Activated CD4-positive, alpha-beta T cell treated with anti-CD3 and anti-CD28 coated beads, Interleukin-2, amount 10 ng/mL, durations not matched to agents 24 days and 14 days (primary cell): ENCODE measurements at regions of chr6 and their contacts with region 1.

Region 1: DNA sequence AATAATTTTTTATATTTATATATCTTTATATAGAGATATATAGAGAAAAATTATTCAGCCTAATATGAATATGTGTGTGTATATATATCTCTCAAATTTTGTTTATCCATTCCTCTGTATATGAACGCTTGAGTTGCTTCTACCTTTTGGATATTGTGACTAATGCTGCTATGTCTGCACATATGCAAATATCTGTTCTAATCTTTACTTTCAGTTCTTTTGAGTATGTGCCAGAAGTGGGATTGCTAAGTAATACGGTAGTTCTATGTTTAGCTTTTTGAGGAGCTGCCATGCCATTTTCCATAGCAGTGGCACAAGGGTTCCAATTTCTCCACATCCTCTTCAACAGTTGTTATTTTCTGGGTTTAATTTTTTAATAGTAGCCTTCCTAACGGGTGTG is 72.8 kb upstream of the CEP85L start:
- DNase-seq: no peak
- H3K4me3 Mint-ChIP-seq: peak overlapping the region; percentile 36
- H3K27ac Mint-ChIP-seq: peak overlapping the region; percentile 59
- H3K4me1 Mint-ChIP-seq: peaks cover 51% of the 10 kb centered on the region
- H3K27me3 Mint-ChIP-seq: no peaks in the 10 kb centered on the region

Region 2: DNA sequence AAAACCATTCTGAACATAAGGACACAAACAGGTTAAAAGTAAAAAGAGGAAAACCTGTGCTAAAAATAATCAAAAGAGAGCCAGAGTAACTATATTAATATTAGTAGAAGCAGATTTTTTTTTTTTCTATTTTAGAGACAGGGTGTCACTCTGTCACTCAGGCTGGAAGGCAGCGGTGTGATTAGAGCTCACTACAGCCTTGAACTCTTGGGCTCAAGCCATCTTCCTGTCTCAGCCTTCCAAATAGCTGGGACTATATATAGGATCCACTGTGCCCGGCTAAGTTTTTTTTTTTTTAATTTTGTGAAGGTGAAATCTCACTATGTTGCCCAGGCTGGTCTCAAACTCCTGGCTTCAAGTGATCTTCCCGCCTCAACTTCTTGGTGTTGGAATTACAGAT is 209.5 kb before region 1 on chr6:
- intact Hi-C with region 1: no loop called
- DNase-seq: no peak
- H3K4me3 Mint-ChIP-seq: no peak overlapping the region
- H3K27ac Mint-ChIP-seq: no peak overlapping the region
- H3K4me1 Mint-ChIP-seq: peaks cover 4% of the 10 kb centered on the region
- H3K27me3 Mint-ChIP-seq: no peaks in the 10 kb centered on the region

Region 3: GRCh38 chr6:118565311-118565960 is 158.8 kb before region 1 on chr6:
- intact Hi-C with region 1: loop called (anchors 5 kb)
- DNase-seq: peak; percentile 80
- H3K4me3 Mint-ChIP-seq: no peak overlapping the region
- H3K27ac Mint-ChIP-seq: no peak overlapping the region
- H3K4me1 Mint-ChIP-seq: peaks cover 13% of the 10 kb centered on the region
- H3K27me3 Mint-ChIP-seq: no peaks in the 10 kb centered on the region

Region 4: DNA sequence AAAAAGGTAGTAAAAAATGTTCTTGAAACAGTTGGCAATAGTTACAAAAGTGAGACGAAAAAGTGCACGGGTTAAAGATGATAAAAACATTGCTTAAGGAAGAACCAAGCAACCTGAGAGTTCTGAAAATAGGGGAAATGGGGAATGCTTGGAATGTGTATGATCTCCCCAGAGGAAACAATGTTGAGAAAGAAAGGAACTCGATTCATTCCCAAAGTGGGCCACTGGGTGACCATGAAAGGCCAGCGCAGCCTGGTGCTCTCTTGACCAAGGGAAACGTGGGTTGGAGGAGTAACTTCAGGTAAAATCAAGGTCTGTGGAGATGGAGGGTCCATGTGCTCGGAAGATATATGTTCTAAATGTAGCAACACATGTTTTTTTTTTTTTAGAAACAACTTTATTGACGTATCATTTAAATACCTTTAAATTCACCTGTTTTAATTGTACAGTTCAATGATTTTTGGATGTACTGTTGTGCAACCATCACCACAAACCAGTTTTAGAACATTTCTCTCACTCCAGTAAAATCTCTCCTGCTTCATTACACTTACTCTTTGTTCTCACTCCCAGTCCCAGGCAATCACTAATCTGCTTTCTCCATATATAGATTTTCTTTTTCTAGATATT is 38.3 kb before region 1 on chr6:
- intact Hi-C with region 1: loop called (anchors 1 kb)
- DNase-seq: no peak
- H3K4me3 Mint-ChIP-seq: no peak overlapping the region
- H3K27ac Mint-ChIP-seq: peak overlapping the region; percentile 18
- H3K4me1 Mint-ChIP-seq: peaks cover 49% of the 10 kb centered on the region
- H3K27me3 Mint-ChIP-seq: no peaks in the 10 kb centered on the region

Region 5: GRCh38 chr6:118736440-118736839 is 12.2 kb after region 1 on chr6:
- intact Hi-C with region 1: loop called (anchors 1 kb)
- DNase-seq: no peak
- H3K4me3 Mint-ChIP-seq: peak overlapping the region; percentile 44
- H3K27ac Mint-ChIP-seq: peak overlapping the region; percentile 81
- H3K4me1 Mint-ChIP-seq: peaks cover 17% of the 10 kb centered on the region
- H3K27me3 Mint-ChIP-seq: no peaks in the 10 kb centered on the region

Region 6: GRCh38 chr6:118768904-118769325 is 44.7 kb after region 1 on chr6:
- intact Hi-C with region 1: loop called (anchors 2 kb)
- DNase-seq: peak; percentile 78
- H3K4me3 Mint-ChIP-seq: peak overlapping the region; percentile 34
- H3K27ac Mint-ChIP-seq: peak overlapping the region; percentile 81
- H3K4me1 Mint-ChIP-seq: peaks cover 18% of the 10 kb centered on the region
- H3K27me3 Mint-ChIP-seq: no peaks in the 10 kb centered on the region

Region 7: DNA sequence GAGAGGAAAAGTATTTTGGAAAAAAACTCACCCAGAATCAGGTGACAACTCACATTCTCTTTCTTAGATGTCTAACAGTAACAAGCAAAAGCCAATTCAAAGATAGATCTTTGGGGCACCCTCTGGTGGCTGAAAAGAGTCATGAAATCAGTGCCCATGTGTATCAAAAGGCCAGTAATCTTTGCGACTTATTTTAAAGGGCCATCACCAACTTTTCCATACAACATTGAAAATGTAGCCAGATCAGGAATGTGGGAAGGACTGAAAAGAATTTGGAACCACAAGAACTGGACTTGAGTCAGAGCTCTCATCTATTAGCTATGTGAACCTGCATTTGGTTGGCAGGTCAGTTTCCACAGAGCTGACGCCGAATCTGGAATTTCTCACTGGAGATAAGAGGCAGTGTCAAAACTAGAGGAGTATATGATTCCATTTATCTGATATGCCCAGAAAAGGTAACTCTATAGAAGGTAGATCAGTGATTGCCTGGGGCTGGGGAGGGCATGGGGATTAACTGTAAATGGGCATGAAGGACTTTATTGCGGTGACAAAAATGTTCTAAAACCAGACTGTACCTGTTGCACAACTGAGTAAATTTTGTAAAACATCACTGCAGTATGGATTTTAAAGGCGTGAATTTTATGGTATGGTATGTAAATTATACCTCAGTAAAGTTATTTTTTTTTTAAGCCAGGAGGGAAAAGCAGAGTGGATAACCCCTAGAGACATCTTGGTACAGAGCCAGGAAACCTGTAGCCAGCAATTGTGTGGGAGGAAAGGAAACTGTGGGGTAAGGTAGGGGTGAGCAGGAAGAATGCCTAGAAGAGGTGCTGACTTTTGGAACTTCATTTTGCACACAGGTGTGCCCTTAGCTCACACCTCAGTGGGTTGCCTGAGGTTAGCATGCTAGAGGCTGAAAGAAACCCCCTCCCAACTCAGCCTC is 52.7 kb after region 1 on chr6:
- intact Hi-C with region 1: loop called (anchors 2 kb)
- DNase-seq: peak; percentile 91
- H3K4me3 Mint-ChIP-seq: peak overlapping the region; percentile 35
- H3K27ac Mint-ChIP-seq: peak overlapping the region; percentile 59
- H3K4me1 Mint-ChIP-seq: peaks cover 15% of the 10 kb centered on the region
- H3K27me3 Mint-ChIP-seq: peaks cover 10% of the 10 kb centered on the region